CD8-positive, alpha-beta T cell (primary cell): ENCODE measurements at regions of chr22 and their contacts with region 1.

Region 1: DNA sequence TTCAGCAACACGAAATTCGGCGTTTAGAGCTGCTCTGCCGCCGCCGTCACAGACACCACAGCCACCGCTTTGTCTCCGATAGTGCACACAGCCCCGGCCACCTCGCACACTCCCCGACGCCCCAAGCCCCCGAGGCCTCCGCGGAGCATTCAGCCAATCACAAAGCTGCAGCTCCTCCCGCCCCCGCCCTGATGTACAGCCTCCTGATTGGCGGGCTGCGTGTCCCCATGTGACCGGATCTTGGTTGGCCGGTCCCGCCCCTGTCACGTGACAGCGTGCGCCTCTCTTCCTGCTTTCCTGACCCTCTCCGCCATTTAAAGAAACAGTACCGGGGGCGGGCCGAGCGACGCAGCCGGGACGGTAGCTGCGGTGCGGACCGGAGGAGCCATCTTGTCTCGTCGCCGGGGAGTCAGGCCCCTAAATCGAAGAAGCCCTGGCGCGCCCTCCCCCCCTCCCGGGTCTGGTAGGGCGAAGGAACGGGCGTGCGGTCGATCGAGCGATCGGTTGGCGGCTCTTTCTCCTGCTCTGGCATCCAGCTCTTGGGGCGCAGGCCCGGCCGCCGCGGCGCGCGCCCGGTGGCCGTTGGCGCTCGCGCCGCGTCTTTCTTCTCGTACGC is at the start of gene TUG1:
- DNase-seq: peak; percentile 94 to 99 (median 97)
- ATAC-seq: peak; percentile 93
- H3K4me3 ChIP-seq: peak within 1 kb of the TSS; percentile 69 to 81
- H3K4me3 Mint-ChIP-seq: peak within 1 kb of the TSS; percentile 97
- H3K27ac ChIP-seq: peak within 1 kb of the TSS; percentile 75 to 91
- H3K27ac Mint-ChIP-seq: peak within 1 kb of the TSS; percentile 98
- H3K4me1 ChIP-seq: peaks cover 21% of the 10 kb centered on the region
- H3K4me1 Mint-ChIP-seq: peaks cover 51% of the 10 kb centered on the region
- H3K27me3 ChIP-seq: no peaks in the 10 kb centered on the region
- H3K27me3 Mint-ChIP-seq: no peaks in the 10 kb centered on the region
- CTCF ChIP-seq: no peak
- total RNA-seq, gene TUG1: 74.9 to 79.0 TPM

Region 2: GRCh38 chr22:29766632-29767170 is 1202.3 kb before region 1 on chr22 and contains the start of gene ZMAT5:
- CTCF ChIA-PET with region 1: no interaction called
- POLR2A ChIA-PET with region 1: no interaction called
- intact Hi-C with region 1: loop called in 1 of 2 experiments (anchors 5 kb)
- DNase-seq: peak; percentile 77 to 97 (median 92)
- ATAC-seq: peak; percentile 94
- H3K4me3 ChIP-seq: peak within 1 kb of the TSS; percentile 83 to 95
- H3K4me3 Mint-ChIP-seq: peak within 1 kb of the TSS; percentile 100
- H3K27ac ChIP-seq: peak within 1 kb of the TSS; percentile 72 to 84
- H3K27ac Mint-ChIP-seq: peak within 1 kb of the TSS; percentile 98
- H3K4me1 ChIP-seq: peaks cover 23% of the 10 kb centered on the region
- H3K4me1 Mint-ChIP-seq: peaks cover 41% of the 10 kb centered on the region
- H3K27me3 ChIP-seq: no peaks in the 10 kb centered on the region
- H3K27me3 Mint-ChIP-seq: no peaks in the 10 kb centered on the region
- CTCF ChIP-seq: no peak
- total RNA-seq, gene ZMAT5: 4.3 to 5.2 TPM

Region 3: GRCh38 chr22:30634471-30635233 is 334.4 kb before region 1 on chr22:
- CTCF ChIA-PET with region 1: interaction called, 8 read pairs
- POLR2A ChIA-PET with region 1: interaction called, 3 read pairs
- intact Hi-C with region 1: loop called in 1 of 2 experiments (anchors 2 kb)
- DNase-seq: peak; percentile 75 to 95 (median 90)
- ATAC-seq: peak; percentile 64
- H3K4me3 ChIP-seq: peak overlapping the region; percentile 60 to 87
- H3K4me3 Mint-ChIP-seq: peak overlapping the region; percentile 81
- H3K27ac ChIP-seq: peak overlapping the region; percentile 32 to 89
- H3K27ac Mint-ChIP-seq: peak overlapping the region; percentile 91
- H3K4me1 ChIP-seq: peaks cover 31% of the 10 kb centered on the region
- H3K4me1 Mint-ChIP-seq: peaks cover 22% of the 10 kb centered on the region
- H3K27me3 ChIP-seq: no peaks in the 10 kb centered on the region
- H3K27me3 Mint-ChIP-seq: no peaks in the 10 kb centered on the region
- CTCF ChIP-seq: peak; percentile 80

Region 4: GRCh38 chr22:30667494-30668385 is 301.3 kb before region 1 on chr22 and contains the start of gene DUSP18:
- CTCF ChIA-PET with region 1: no interaction called
- POLR2A ChIA-PET with region 1: no interaction called
- intact Hi-C with region 1: no loop called
- DNase-seq: peak; percentile 88 to 98 (median 95)
- ATAC-seq: peak; percentile 90
- H3K4me3 ChIP-seq: peak within 1 kb of the TSS; percentile 73 to 87
- H3K4me3 Mint-ChIP-seq: peak within 1 kb of the TSS; percentile 96
- H3K27ac ChIP-seq: peak within 1 kb of the TSS; percentile 54 to 72
- H3K27ac Mint-ChIP-seq: peak within 1 kb of the TSS; percentile 94
- H3K4me1 ChIP-seq: peaks cover 11% of the 10 kb centered on the region
- H3K4me1 Mint-ChIP-seq: peaks cover 18% of the 10 kb centered on the region
- H3K27me3 ChIP-seq: no peaks in the 10 kb centered on the region
- H3K27me3 Mint-ChIP-seq: no peaks in the 10 kb centered on the region
- CTCF ChIP-seq: no peak
- total RNA-seq, gene DUSP18: 3.4 to 4.5 TPM

Region 5: GRCh38 chr22:30947816-30948454 is 21.1 kb before region 1 on chr22:
- CTCF ChIA-PET with region 1: interaction called, 8 read pairs
- POLR2A ChIA-PET with region 1: interaction called, 9 read pairs
- intact Hi-C with region 1: loop called (anchors 1 to 2 kb)
- DNase-seq: peak in 2 of 9 experiments; percentile 52 to 68
- ATAC-seq: peak; percentile 54
- H3K4me3 ChIP-seq: no peak overlapping the region
- H3K4me3 Mint-ChIP-seq: no peak overlapping the region
- H3K27ac ChIP-seq: no peak overlapping the region
- H3K27ac Mint-ChIP-seq: no peak overlapping the region
- H3K4me1 ChIP-seq: peaks cover 58% of the 10 kb centered on the region
- H3K4me1 Mint-ChIP-seq: peaks cover 64% of the 10 kb centered on the region
- H3K27me3 ChIP-seq: no peaks in the 10 kb centered on the region
- H3K27me3 Mint-ChIP-seq: no peaks in the 10 kb centered on the region
- CTCF ChIP-seq: peak; percentile 60

Region 6: GRCh38 chr22:31107178-31107893 is 138.3 kb after region 1 on chr22 and contains the start of gene SELENOM:
- CTCF ChIA-PET with region 1: interaction called, 5 read pairs
- POLR2A ChIA-PET with region 1: interaction called, 5 read pairs
- intact Hi-C with region 1: loop called in 1 of 2 experiments (anchors 1 kb)
- DNase-seq: peak; percentile 69 to 94 (median 85)
- ATAC-seq: peak; percentile 96
- H3K4me3 ChIP-seq: peak within 1 kb of the TSS; percentile 80 to 84
- H3K4me3 Mint-ChIP-seq: peak within 1 kb of the TSS; percentile 98
- H3K27ac ChIP-seq: peak within 1 kb of the TSS; percentile 72 to 80
- H3K27ac Mint-ChIP-seq: peak within 1 kb of the TSS; percentile 91
- H3K4me1 ChIP-seq: peaks cover 17% of the 10 kb centered on the region
- H3K4me1 Mint-ChIP-seq: peaks cover 25% of the 10 kb centered on the region
- H3K27me3 ChIP-seq: no peaks in the 10 kb centered on the region
- H3K27me3 Mint-ChIP-seq: no peaks in the 10 kb centered on the region
- CTCF ChIP-seq: peak; percentile 70
- total RNA-seq, gene SELENOM: 55.6 to 62.2 TPM

Region 7: GRCh38 chr22:31290494-31291471 is 321.8 kb after region 1 on chr22:
- CTCF ChIA-PET with region 1: no interaction called
- POLR2A ChIA-PET with region 1: interaction called, 7 read pairs
- intact Hi-C with region 1: loop called (anchors 1 to 5 kb)
- DNase-seq: peak; percentile 92 to 99 (median 95)
- ATAC-seq: peak; percentile 72
- H3K4me3 ChIP-seq: peak overlapping the region; percentile 97 to 99
- H3K4me3 Mint-ChIP-seq: peak overlapping the region; percentile 99
- H3K27ac ChIP-seq: peak overlapping the region; percentile 99
- H3K27ac Mint-ChIP-seq: peak overlapping the region; percentile 100
- H3K4me1 ChIP-seq: peaks cover 55% of the 10 kb centered on the region
- H3K4me1 Mint-ChIP-seq: peaks cover 65% of the 10 kb centered on the region
- H3K27me3 ChIP-seq: no peaks in the 10 kb centered on the region
- H3K27me3 Mint-ChIP-seq: no peaks in the 10 kb centered on the region
- CTCF ChIP-seq: no peak

Region 8: DNA sequence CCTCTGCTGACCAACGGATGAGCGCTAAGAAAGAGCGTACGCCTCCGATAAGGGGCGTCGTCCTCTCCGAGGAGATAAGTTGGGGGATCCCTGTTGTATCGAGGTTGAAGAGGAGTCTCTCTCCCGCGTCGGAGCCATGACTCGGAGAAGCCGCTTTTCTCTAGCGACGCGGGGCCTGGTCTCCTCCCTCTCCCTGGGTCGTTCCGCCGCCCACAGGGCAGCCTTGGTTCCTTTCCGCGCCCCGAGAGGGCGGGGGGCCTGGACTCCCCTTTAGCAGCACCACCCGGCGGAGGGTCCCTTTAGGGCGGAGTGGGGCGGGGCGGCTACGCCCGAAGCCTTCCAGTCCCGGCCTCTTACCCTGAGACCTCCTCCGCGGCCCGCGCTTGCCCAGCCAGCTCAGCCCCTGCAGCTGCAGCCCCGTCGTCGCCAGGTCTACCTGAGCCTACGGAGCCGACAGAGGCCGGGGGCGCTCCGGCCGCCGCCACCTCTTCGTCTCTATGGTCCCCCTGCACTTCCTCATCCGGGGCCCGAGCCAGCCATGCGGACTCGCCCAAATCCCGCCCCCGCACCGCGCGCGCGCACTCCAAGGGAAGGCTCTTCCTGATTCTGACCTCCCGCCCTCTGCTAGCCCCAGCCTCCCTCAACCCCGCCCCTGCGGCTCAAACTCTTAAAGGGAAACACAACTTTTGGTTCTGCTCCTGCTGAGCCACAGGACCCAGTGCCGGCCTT is 780.8 kb after region 1 on chr22 and contains the start of gene PRR14L:
- CTCF ChIA-PET with region 1: no interaction called
- POLR2A ChIA-PET with region 1: no interaction called
- intact Hi-C with region 1: loop called in 1 of 2 experiments (anchors 5 kb)
- DNase-seq: peak; percentile 96 to 100 (median 99)
- ATAC-seq: peak; percentile 75
- H3K4me3 ChIP-seq: peak within 1 kb of the TSS; percentile 84 to 90
- H3K4me3 Mint-ChIP-seq: peak within 1 kb of the TSS; percentile 98
- H3K27ac ChIP-seq: peak within 1 kb of the TSS; percentile 79 to 84
- H3K27ac Mint-ChIP-seq: peak within 1 kb of the TSS; percentile 97
- H3K4me1 ChIP-seq: peaks cover 40% of the 10 kb centered on the region
- H3K4me1 Mint-ChIP-seq: peaks cover 53% of the 10 kb centered on the region
- H3K27me3 ChIP-seq: no peaks in the 10 kb centered on the region
- H3K27me3 Mint-ChIP-seq: no peaks in the 10 kb centered on the region
- CTCF ChIP-seq: no peak
- total RNA-seq, gene PRR14L: 17.8 to 21.2 TPM